PC-3 (cell line): ENCODE measurements at regions of chr2 and their contacts with region 1.

Region 1: DNA sequence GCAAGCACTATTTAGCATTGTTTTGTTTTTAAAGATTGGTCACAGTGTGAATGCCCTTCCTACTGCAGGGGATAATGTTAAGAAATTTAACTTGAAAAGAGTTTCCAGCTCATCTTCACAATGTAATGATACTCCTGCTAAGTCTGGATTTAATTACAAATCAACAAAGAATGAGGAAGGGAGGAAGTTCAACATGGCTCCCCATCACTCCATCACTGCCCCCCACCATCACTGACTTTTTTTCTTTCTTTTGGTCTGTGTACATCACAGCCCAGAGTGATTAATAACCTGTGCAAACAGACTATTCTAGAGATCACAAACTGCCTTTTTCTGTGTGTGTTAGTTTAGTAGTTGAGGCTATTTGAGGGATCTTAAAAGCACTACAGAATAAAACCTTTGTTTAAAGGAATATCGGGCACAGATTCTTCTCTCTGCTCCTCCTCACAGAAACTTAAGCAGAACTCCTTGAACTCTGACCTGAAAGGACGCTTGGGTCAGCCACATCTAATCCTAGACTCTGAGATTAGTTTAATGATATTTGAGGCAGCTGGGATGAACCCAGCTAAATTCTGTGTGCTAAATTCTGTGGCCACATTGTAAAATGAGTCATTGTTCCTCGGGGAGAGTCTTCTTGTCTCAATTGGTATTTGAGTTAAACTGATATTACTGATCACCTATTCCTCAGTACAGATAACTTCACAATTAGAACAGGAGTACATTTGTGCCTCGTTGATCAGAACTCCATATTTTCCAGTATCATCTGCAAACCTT is 47.8 kb downstream of the SATB2 start:
- DNase-seq: peak; percentile 65
- ATAC-seq: peak; percentile 78
- H3K4me3 ChIP-seq: no peak overlapping the region
- H3K27ac ChIP-seq: no peak overlapping the region
- H3K4me1 ChIP-seq: peaks cover 12% of the 10 kb centered on the region
- H3K27me3 ChIP-seq: no peaks in the 10 kb centered on the region
- CTCF ChIP-seq: no peak

Region 2: GRCh38 chr2:199392363-199392762 is 17.6 kb before region 1 on chr2:
- CTCF ChIA-PET with region 1: no interaction called
- POLR2A ChIA-PET with region 1: no interaction called
- intact Hi-C with region 1: loop called (anchors 2 kb)
- DNase-seq: peak; percentile 19
- ATAC-seq: peak; percentile 81
- H3K4me3 ChIP-seq: no peak overlapping the region
- H3K27ac ChIP-seq: no peak overlapping the region
- H3K4me1 ChIP-seq: no peaks in the 10 kb centered on the region
- H3K27me3 ChIP-seq: no peaks in the 10 kb centered on the region
- CTCF ChIP-seq: no peak